Tibial artery (tissue), 4 donors: ENCODE measurements at regions of chr2 and their contacts with region 1.

Region 1: DNA sequence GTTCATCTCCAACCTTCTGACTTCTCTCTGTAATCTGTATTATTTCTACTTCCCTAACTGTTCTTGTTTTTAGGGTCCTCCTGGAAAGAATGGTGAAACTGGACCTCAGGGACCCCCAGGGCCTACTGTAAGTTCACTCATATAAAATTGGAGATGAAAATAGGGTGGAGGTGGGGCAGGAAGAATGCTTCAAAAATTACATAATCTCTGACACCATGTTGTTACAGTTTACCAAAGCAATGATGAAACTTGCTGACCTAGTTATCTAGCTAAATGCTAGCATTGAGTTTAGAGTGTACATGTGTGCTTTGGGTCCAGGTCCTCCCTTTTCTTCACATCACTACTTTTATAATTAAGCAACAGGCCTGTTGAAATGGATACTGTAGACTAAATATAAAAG is 23.1 kb downstream of the COL3A1 start:
- DNase-seq: no peak
- H3K4me3 ChIP-seq: no peak overlapping the region
- H3K27ac ChIP-seq: peak overlapping the region; percentile 43 to 54
- H3K4me1 ChIP-seq: peaks cover 0 to 22% (median 0%) of the 10 kb centered on the region in 4 donors
- H3K27me3 ChIP-seq: no peaks in the 10 kb centered on the region
- CTCF ChIP-seq: no peak

Region 2: DNA sequence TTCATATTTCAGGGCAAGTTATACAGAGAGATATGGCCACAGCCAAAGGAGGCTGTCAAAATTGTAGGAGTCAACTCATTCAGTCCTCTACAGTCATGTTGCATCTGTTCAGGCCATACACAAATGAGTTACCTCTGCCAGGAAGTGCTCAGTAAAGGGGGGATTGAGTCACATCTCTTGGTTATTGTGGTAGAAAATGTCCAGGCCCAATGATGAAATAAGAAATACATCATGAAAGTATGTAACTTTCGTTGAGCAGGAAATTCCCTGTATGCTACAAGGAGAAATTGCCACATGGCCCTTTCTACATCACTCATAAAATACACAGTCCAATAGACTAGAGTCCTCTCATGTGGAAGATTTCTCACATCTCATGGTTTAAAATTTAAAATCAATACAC is 127.0 kb before region 1 on chr2:
- intact Hi-C with region 1: no loop called
- DNase-seq: no peak
- H3K4me3 ChIP-seq: no peak overlapping the region
- H3K27ac ChIP-seq: peak overlapping the region; percentile 46 to 61
- H3K4me1 ChIP-seq: peaks cover 0 to 28% (median 9%) of the 10 kb centered on the region in 4 donors
- H3K27me3 ChIP-seq: no peaks in the 10 kb centered on the region
- CTCF ChIP-seq: no peak

Region 3: DNA sequence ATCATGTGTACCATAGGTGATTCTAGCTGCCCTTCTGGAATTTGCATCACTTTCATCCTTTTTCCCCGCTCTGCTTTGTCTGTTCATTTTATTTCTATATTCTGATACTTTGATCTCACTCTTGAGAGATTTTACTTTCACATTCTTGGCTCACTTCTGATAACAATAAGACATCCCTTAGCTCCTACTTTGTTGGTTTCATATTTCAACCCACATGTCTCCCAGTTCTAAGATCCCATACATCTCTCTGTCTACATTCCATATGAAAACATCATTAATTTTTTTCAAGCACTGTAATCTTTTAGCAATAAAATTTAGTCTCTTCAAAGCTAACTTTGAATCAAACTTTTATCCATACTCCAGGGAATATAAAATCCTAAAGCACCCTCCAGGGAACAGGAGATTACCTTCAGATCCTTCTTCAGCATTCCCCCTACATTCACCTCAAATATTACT is 52.5 kb after region 1 on chr2:
- intact Hi-C with region 1: loop called (anchors 5 kb)
- DNase-seq: no peak
- H3K4me3 ChIP-seq: no peak overlapping the region
- H3K27ac ChIP-seq: no peak overlapping the region
- H3K4me1 ChIP-seq: no peaks in the 10 kb centered on the region
- H3K27me3 ChIP-seq: no peaks in the 10 kb centered on the region
- CTCF ChIP-seq: no peak

Region 4: GRCh38 chr2:189783927-189784867 is 786.9 kb after region 1 on chr2 and contains the starts of genes ORMDL1 and PMS1:
- intact Hi-C with region 1: loop called (anchors 10 kb)
- DNase-seq: peak; percentile 94 to 97
- H3K4me3 ChIP-seq: peak within 1 kb of the TSS; percentile 62 to 69
- H3K27ac ChIP-seq: peak within 1 kb of the TSS; percentile 90
- H3K4me1 ChIP-seq: peaks cover 4 to 36% (median 18%) of the 10 kb centered on the region in 4 donors
- H3K27me3 ChIP-seq: no peaks in the 10 kb centered on the region
- CTCF ChIP-seq: no peak